ENCODE measurements at regions of chr1 and their contacts with region 1.

Region 1: GRCh38 chr1:78617615-78618026 is 2.6 kb upstream of the IFI44L start:
- DNase-seq: peak; percentile 75
- H3K4me3 ChIP-seq: no peak overlapping the region
- H3K27ac ChIP-seq: no peak overlapping the region
- H3K4me1 ChIP-seq: no peaks in the 10 kb centered on the region
- CTCF ChIP-seq: peak; percentile 89

Region 2: GRCh38 chr1:78676347-78676982 is 58.8 kb after region 1 on chr1:
- CTCF ChIA-PET with region 1: no interaction called
- POLR2A ChIA-PET with region 1: no interaction called
- intact Hi-C with region 1: loop called (anchors 2 kb)
- DNase-seq: peak; percentile 61
- H3K4me3 ChIP-seq: no peak overlapping the region
- H3K27ac ChIP-seq: no peak overlapping the region
- H3K4me1 ChIP-seq: no peaks in the 10 kb centered on the region
- CTCF ChIP-seq: peak; percentile 97